ENCODE measurements at regions of chr1 and their contacts with region 1.

Region 1: GRCh38 chr1:226121587-226122400 is 59.3 kb downstream of the H3-3A start:
- DNase-seq: peak in 9 of 10 donors; percentile 18 to 93 (median 54)

Region 2: DNA sequence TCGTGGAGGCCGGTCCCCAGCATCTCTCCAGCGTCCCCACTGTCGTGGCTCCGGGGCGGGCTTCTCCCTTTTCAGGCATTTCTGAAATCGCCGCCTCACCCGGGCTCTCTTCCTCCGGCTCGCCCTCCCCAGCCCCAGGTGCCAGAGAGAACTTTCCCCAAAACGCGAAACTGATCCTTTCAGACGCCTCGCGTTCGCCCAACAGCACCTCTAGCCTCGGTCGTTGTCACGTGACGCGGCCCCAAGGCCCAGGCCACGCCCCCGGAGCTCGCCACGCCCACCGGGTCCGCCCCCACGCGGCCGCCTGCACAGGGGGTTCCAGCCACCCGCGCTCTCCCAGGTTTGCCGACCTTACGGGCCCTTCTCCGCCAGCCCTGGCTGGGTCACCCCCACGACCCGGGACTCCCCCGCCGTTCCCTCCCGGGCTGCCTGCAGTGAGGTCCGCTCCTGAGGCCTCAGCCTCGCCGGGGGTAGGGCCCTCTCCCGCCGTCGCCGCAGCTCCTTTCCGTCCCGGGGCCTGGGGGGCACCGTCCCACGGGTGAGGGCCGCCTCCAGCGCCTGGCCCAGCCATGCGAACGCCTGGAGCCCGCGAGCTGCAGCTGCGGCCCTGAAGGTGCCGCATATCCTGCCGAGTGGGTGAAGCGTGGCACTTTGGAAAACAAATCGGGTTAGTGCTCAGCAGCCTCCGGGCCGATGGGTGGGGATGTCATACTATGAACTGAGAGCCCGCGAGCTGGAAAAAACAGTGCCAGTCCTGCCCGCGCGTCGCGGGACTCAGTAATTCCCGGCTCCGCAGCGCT is 38.3 kb before region 1 on chr1:
- intact Hi-C with region 1: loop called (anchors 5 kb)
- DNase-seq: peak; percentile 82 to 98 (median 93)

Region 3: DNA sequence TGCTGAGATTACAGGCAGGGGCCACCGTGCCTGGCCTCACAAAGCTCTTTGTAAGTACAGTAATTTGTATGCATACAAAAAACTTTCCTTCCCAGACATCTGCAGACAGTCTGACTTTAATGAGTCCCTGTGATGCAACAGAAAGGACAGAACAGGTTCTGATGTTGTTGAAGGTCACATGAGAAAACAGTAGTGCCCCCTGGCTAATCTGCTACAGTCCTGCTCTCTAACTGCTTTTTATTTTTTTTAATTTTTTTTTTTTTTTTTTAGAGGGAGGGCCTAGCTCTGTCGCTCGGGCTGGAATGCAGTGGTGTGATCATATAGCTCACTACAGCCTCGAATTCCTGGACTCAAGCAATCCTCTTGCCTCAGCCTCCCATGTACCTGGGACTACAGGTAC is 28.0 kb after region 1 on chr1:
- intact Hi-C with region 1: no loop called
- DNase-seq: no peak

Region 4: GRCh38 chr1:226201029-226201593 is 79.3 kb after region 1 on chr1:
- intact Hi-C with region 1: loop called (anchors 1 kb)
- DNase-seq: peak in 1 of 10 donors; percentile 26